Calu3 (cell line): ENCODE measurements at regions of chr20 and their contacts with region 1.

Region 1: GRCh38 chr20:53059848-53060247 is 87.7 kb downstream of the TSHZ2 start:
- DNase-seq: no peak
- H3K4me3 Mint-ChIP-seq: no peak overlapping the region
- H3K27ac Mint-ChIP-seq: no peak overlapping the region
- H3K4me1 Mint-ChIP-seq: no peaks in the 10 kb centered on the region
- H3K27me3 Mint-ChIP-seq: peaks cover 24% of the 10 kb centered on the region
- CTCF ChIP-seq: no peak

Region 2: GRCh38 chr20:53077373-53078205 is 17.7 kb after region 1 on chr20:
- CTCF ChIA-PET with region 1: no interaction called
- intact Hi-C with region 1: loop called (anchors 1 kb)
- DNase-seq: peak; percentile 49
- H3K4me3 Mint-ChIP-seq: no peak overlapping the region
- H3K27ac Mint-ChIP-seq: no peak overlapping the region
- H3K4me1 Mint-ChIP-seq: peaks cover 11% of the 10 kb centered on the region
- H3K27me3 Mint-ChIP-seq: peaks cover 13% of the 10 kb centered on the region
- CTCF ChIP-seq: no peak

Region 3: GRCh38 chr20:53195876-53196610 is 136.2 kb after region 1 on chr20:
- CTCF ChIA-PET with region 1: no interaction called
- intact Hi-C with region 1: no loop called
- DNase-seq: no peak
- H3K4me3 Mint-ChIP-seq: no peak overlapping the region
- H3K27ac Mint-ChIP-seq: no peak overlapping the region
- H3K4me1 Mint-ChIP-seq: no peaks in the 10 kb centered on the region
- H3K27me3 Mint-ChIP-seq: peaks cover 84% of the 10 kb centered on the region
- CTCF ChIP-seq: no peak